GM10248 (cell line): ENCODE measurements at regions of chr13 and their contacts with region 1.

Region 1: DNA sequence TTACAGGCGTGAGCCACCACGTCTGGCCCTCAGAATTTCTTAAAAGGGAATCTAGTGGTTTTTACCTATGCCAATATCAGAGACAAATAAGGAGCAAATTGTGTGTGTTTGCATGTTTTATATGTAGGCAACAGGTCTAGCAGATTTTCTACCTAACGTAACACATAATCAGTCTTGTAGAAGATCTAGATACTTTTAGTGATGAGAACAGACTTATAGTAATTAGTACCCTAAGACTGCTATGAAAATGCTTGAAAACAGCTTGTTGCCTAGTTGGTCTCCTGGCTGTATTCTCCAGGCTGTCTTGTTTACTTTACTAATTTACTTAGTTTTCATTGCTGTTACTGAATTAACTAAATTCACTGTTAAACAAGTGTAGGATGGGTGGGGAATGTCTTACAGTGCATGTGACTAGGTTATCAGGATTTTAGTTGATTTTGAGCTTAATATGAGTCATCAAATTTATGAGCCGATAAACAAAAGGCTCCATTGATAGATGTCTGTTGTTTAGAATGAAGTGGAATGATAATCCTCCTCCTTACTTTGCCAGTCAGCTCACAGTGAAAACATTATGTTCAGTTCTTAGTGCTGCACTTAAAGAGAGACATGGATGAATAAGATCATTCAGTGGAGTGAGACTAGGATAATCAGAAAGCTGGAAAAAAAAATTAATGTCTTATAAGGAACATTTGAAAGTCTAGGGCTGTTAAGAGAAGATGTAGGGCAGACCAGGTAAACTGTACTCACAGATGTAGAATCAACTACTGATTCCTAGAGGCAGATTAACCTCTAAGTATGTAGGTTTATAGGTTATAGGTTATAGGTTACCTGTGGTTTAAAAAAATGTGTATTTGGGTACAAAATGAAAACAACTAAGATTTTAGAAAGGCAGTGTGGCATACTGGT is 22.4 kb downstream of the GTF2F2 start:
- DNase-seq: no peak
- CTCF ChIP-seq: no peak

Region 2: GRCh38 chr13:45109102-45109720 is 33.5 kb before region 1 on chr13:
- CTCF ChIA-PET with region 1: no interaction called
- POLR2A ChIA-PET with region 1: no interaction called
- DNase-seq: peak; percentile 52
- CTCF ChIP-seq: no peak

Region 3: GRCh38 chr13:45156565-45157361 is 14.1 kb after region 1 on chr13:
- CTCF ChIA-PET with region 1: interaction called, 26 read pairs
- POLR2A ChIA-PET with region 1: no interaction called
- DNase-seq: no peak
- CTCF ChIP-seq: no peak